ENCODE measurements at regions of chr5 and their contacts with region 1.

Region 1: DNA sequence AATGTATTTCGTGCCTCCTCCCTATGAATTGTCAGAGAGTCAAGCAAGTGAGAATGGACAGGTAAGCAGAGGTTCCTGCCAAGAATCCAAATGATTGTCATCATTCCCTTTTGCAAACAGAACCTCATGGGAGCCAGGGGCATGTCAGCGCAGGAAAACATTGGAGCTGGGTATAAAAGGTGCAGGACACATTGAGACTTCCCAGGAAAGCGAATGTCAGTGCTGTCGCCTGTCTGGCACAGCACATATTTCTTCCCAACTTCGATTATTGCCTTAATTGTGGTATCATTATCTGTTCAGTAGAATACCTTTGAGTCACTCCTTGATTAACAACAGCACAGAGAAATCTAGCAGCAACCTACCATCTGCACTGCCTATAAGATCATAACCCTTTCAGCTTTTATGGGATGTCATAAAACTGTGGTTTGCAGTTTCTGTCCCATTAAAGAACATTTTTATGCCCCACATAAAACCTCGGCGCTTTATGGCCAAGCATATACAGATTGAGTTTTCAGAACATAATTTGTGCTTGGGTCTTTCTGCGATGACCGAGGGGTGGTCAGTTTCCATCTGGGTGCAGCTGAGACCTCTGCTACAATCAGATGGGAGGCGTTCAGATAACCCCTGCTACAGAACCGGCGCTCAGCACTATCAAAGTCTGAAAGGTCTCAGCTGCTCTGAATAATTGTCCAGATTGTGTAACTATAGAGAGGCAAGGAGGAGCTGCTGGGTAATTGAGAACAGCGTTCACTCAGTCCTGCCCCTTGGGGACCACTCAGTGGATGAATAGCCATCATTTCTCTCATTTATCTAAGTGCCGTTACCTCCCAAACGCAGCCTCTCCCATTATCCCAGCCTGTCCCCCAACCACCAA is 30.9 kb upstream of the WWC1 start:
- DNase-seq: no peak
- ATAC-seq: peak; percentile 80

Region 2: DNA sequence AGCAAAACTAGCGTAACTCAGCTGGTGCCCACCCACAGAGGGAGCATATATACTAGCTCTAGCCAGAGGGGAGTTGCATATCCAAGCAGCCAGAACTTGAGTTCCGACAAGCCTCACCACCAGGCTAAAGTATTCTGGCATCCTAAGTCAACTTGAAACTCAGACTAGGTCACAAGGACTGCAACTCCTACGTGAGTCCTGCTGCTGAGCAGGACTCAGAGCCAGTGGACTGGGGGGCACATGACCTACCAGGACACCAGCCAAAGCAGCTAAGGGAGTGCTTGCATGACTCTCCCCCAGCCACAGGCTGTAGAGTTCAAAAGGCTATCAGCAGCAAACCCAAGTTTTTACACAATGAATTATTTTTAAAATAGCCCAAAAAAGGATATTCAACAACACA is 1349.1 kb after region 1 on chr5:
- intact Hi-C with region 1: loop called (anchors 5 kb)
- DNase-seq: no peak
- ATAC-seq: no peak

Region 3: GRCh38 chr5:169934990-169935389 is 1674.4 kb after region 1 on chr5:
- intact Hi-C with region 1: no loop called
- DNase-seq: no peak
- ATAC-seq: no peak